ENCODE measurements at regions of chr5 and their contacts with region 1.

Region 1: GRCh38 chr5:61167382-61167781 is 5.1 kb upstream of the SMIM15 start:
- DNase-seq: peak in 1 of 2 experiments; percentile 11
- H3K4me3 ChIP-seq: no peak overlapping the region
- H3K27ac ChIP-seq: no peak overlapping the region
- H3K4me1 ChIP-seq: peaks cover 13% of the 10 kb centered on the region
- H3K27me3 ChIP-seq: no peaks in the 10 kb centered on the region
- CTCF ChIP-seq: peak; percentile 67

Region 2: GRCh38 chr5:61306511-61307131 is 139.2 kb after region 1 on chr5:
- CTCF ChIA-PET with region 1: no interaction called
- POLR2A ChIA-PET with region 1: no interaction called
- intact Hi-C with region 1: loop called (anchors 1 kb)
- DNase-seq: peak in 1 of 2 experiments; percentile 76
- H3K4me3 ChIP-seq: no peak overlapping the region
- H3K27ac ChIP-seq: no peak overlapping the region
- H3K4me1 ChIP-seq: peaks cover 71% of the 10 kb centered on the region
- H3K27me3 ChIP-seq: no peaks in the 10 kb centered on the region
- CTCF ChIP-seq: no peak

Region 3: GRCh38 chr5:61658592-61659008 is 491.2 kb after region 1 on chr5:
- CTCF ChIA-PET with region 1: no interaction called
- POLR2A ChIA-PET with region 1: interaction called, 8 read pairs
- intact Hi-C with region 1: loop called (anchors 1 kb)
- DNase-seq: peak in 1 of 2 experiments; percentile 82
- H3K4me3 ChIP-seq: no peak overlapping the region
- H3K27ac ChIP-seq: no peak overlapping the region
- H3K4me1 ChIP-seq: no peaks in the 10 kb centered on the region
- H3K27me3 ChIP-seq: no peaks in the 10 kb centered on the region
- CTCF ChIP-seq: peak; percentile 94

Region 4: DNA sequence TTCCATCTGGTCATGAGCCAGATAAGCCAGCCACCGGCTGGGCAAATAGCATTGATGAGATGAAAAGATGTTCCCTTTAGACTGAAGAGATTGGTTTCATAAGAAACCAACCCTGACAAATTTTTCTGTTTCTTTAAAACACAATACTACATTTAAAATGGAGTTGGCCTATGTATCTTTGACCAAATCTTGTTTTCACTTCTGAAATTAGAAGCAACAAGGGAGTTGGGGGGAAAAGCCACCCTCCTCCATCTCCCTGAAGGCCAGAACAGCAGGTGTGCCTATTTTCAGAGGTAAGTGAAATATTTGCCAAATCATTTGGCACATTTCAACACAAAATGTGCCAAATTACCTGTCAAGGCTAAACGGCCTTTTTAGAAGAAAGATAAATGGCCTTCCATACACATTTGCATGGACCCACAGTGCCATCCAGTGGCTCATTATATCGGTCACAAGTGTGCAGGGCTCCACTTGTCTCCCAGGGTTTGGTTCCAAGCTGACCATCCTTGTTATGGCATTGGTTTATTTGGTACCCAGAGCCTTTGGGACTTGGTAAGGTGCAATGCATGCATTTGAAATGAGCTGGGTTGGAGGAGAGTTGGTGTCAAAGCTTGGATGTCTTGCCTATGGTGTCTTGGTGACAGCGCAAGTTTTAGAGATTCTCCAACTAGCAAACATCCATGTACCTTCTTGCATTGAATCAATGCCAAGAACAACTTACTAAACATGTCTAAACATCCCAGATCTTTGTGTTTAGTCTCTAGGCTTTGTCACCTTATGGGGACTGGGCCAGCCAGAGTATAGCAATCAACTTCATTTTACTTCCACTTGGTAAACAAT is 766.6 kb after region 1 on chr5:
- CTCF ChIA-PET with region 1: no interaction called
- POLR2A ChIA-PET with region 1: no interaction called
- intact Hi-C with region 1: loop called (anchors 1 kb)
- DNase-seq: peak in 1 of 2 experiments; percentile 41
- H3K4me3 ChIP-seq: no peak overlapping the region
- H3K27ac ChIP-seq: no peak overlapping the region
- H3K4me1 ChIP-seq: no peaks in the 10 kb centered on the region
- H3K27me3 ChIP-seq: 0 out of 2 replicates have a peak, but pooled peaks cover 13% of the 10 kb centered on the region
- CTCF ChIP-seq: peak; percentile 62

Measured in PC-9 (cell line).